BJ (cell line): ENCODE measurements at regions of chrX and their contacts with region 1.

Region 1: DNA sequence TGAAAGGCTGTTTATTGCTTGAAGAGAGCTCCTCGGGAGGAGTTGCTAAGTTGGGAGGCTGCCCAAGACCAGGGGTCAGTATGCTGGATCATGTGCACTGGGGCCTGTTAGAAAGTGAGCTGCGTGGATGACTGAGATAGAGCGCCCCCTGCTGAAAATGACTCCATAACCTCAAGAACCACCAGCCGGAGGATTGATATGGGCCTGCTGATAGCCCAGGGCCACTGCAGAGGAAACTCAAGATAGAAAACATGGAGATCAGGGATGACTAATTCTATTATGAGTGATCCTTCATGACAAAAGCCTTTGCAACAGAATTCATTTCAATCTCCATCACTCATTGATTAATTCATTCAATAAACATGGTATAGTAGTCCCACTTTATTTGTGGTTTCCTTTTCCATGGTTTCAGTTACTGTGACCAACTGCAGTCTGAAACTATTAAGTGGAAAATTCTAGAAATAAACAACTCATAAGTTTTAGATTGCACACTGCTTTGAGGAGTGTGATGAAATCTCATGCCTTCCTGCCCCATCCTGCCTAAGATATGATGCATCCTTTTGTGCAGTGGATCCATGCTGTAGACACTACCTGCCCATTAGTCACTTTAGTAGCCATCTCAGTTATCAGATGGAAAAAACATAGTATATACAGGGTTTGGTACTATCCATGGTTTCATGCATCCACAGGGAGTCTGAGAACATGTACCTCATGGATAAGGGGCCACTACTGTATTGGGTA is 126.7 kb upstream of the MBNL3 start:
- DNase-seq: no peak
- H3K4me3 ChIP-seq: no peak overlapping the region
- H3K27me3 ChIP-seq: no peaks in the 10 kb centered on the region
- CTCF ChIP-seq: peak; percentile 49

Region 2: GRCh38 chrX:132092439-132093065 is 523.0 kb before region 1 on chrX:
- CTCF ChIA-PET with region 1: interaction called, 15 read pairs
- POLR2A ChIA-PET with region 1: no interaction called
- DNase-seq: peak; percentile 7
- H3K4me3 ChIP-seq: no peak overlapping the region
- H3K27me3 ChIP-seq: no peaks in the 10 kb centered on the region
- CTCF ChIP-seq: peak; percentile 71

Region 3: DNA sequence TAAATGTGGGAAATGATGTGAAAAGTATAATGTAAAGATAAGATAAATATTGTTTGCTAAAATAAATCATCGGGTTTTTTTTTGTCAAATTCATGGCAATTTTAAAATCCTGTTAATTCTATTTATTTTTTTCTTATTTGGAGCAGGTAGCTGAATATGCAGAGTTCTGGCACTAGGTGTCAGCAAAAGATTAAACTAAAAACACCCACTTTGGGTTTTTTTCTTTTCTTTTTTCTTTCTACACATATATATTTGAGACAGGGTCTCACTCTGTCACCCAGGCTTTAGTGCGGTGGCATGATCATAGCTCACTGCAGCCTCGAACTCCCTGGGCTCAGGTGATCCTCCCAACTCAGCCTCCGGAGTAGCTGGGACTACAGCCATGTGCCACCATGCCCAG is 389.4 kb before region 1 on chrX:
- CTCF ChIA-PET with region 1: interaction called, 10 read pairs
- POLR2A ChIA-PET with region 1: no interaction called
- DNase-seq: no peak
- H3K4me3 ChIP-seq: no peak overlapping the region
- H3K27me3 ChIP-seq: no peaks in the 10 kb centered on the region
- CTCF ChIP-seq: peak; percentile 36; the same call in 1 of the 2 replicates

Region 4: DNA sequence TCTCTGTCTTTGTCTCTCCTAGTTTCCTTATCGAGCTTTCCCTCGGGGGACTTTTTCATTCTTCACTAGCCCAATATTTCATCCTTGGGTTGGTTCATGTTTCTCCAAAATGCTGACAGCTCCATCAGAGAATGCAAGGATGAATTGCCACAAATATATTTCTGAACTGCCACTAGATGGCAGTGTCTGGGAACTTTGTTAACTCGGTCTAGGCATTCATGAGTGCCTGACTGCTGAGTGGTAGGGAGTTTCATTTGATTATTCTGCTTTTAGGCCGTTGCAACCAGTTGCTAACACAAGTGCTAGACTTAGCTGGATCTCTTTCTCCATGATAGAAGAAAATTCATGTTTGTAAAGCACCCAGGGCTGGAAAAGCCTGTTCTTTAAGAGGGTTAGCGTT is 322.8 kb before region 1 on chrX:
- CTCF ChIA-PET with region 1: interaction called, 43 read pairs
- POLR2A ChIA-PET with region 1: no interaction called
- DNase-seq: no peak
- H3K4me3 ChIP-seq: no peak overlapping the region
- H3K27me3 ChIP-seq: no peaks in the 10 kb centered on the region
- CTCF ChIP-seq: peak; percentile 47

Region 5: DNA sequence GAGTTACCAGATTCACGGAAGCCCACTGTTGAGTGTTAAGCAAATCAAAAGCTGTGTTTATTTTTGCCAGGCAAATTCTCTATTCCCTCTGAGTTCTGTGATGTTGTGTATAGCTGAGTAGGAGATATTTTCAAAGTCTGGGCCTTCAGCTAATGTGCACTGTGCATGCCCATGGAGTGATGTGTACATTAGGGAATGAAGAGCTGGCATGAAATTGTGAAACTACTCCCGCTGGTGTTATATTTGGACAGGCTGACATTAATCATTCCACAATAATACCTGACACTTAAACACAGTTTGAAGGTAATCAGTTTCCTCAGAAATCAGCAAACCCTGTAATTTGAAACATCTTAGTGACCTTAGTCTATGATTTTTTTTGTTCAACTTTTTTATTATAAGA is 38.6 kb before region 1 on chrX:
- CTCF ChIA-PET with region 1: no interaction called
- POLR2A ChIA-PET with region 1: no interaction called
- DNase-seq: no peak
- H3K4me3 ChIP-seq: no peak overlapping the region
- H3K27me3 ChIP-seq: no peaks in the 10 kb centered on the region
- CTCF ChIP-seq: no peak